Right ventricle myocardium inferior (tissue), 1 donor: ENCODE measurements at regions of chr20 and their contacts with region 1.

Region 1: GRCh38 chr20:8131598-8132483 is at the start of gene PLCB1:
- DNase-seq: peak; percentile 93
- ATAC-seq: peak; percentile 90
- total RNA-seq, gene PLCB1: 7.2 TPM

Region 2: GRCh38 chr20:8043687-8044282 is 88.1 kb before region 1 on chr20:
- intact Hi-C with region 1: loop called (anchors 5 kb)
- DNase-seq: peak; percentile 13
- ATAC-seq: peak; percentile 46

Region 3: GRCh38 chr20:8305449-8305978 is 173.7 kb after region 1 on chr20:
- intact Hi-C with region 1: loop called (anchors 5 kb)
- DNase-seq: peak; percentile 79
- ATAC-seq: no peak

Region 4: DNA sequence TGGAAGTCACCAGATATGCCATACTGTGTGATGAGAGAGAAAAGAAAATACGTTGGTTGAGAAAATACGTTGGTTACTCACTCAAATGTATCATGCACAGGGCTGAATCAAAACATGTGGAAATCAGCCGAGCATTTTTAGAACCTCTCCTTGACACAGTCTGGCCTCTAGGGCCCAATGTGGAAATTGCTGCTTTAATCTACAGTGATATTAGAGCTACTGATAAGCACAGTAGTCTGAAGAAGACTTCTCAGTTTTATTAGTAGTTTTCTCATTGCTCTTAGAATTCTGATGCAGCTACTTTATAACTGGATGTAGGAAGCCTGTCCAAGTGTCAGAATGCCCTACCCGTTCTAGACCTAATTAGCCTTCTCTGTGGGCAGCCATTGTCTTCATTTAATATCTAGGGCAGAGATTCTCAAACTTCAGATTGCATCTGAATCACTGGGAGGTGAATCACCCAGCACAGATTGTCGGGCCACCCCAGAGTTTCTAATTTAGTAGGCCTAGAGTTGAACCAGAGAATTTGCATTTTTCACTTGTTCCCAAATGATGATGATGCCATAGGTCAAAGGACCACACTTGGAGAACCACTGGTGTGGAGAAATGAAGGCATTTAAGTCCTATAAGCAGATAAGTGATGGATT is 229.3 kb after region 1 on chr20:
- intact Hi-C with region 1: no loop called
- DNase-seq: no peak
- ATAC-seq: peak; percentile 85

Region 5: DNA sequence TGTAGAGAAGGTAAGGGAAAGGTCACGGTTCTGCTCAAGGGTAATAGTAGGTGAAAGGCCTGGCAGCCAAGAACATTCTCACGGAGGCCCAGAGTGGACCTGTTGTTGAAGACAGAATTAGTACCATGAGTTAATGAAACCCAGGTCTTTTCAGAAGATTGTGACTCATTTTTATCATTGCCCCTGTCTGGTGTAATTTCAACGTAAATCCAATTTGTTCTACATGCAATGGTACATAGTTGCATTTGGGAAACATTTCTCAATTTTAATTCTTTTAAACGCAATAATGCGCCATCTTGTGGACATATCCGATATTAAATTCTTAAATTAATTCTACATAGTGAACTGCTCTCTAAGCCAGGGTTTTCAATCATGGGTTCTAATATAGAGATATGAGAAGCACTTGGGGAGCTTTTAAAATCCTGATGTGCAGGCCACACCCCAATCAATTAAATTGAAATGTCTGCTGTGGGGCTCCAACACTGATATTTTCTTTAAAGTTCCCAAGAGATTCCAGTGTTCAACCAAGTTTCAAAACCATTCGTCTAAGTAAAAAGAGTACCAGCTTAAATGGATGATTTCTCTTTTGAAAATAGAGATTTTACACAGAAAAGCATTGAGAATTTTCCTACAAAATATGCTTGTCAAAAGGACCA is 257.7 kb after region 1 on chr20:
- intact Hi-C with region 1: loop called (anchors 1 kb)
- DNase-seq: peak; percentile 54
- ATAC-seq: peak; percentile 40

Region 6: GRCh38 chr20:8722276-8722928 is 590.6 kb after region 1 on chr20:
- intact Hi-C with region 1: loop called (anchors 1 kb)
- DNase-seq: no peak
- ATAC-seq: peak; percentile 81